T-cell (primary cell): ENCODE measurements at regions of chr19 and their contacts with region 1.

Region 1: GRCh38 chr19:52789421-52789820 is 2.8 kb upstream of the ZNF600 start:
- DNase-seq: no peak
- ATAC-seq: no peak
- H3K4me3 ChIP-seq: no peak overlapping the region
- H3K4me3 Mint-ChIP-seq: no peak overlapping the region
- H3K27ac ChIP-seq: no peak overlapping the region
- H3K27ac Mint-ChIP-seq: no peak overlapping the region
- H3K4me1 ChIP-seq: peaks cover 0 to 28% of the 10 kb centered on the region in 2 experiments
- H3K4me1 Mint-ChIP-seq: peaks cover 28 to 30% (median 28%) of the 10 kb centered on the region in 3 donors
- H3K27me3 ChIP-seq: peaks cover 0 to 2% of the 10 kb centered on the region in 2 experiments
- H3K27me3 Mint-ChIP-seq: no peaks in the 10 kb centered on the region

Region 2: GRCh38 chr19:52809801-52810200 is 20.4 kb after region 1 on chr19:
- CTCF ChIA-PET with region 1: interaction called in 1 of 2 experiments, 12 read pairs
- POLR2A ChIA-PET with region 1: no interaction called
- DNase-seq: no peak
- ATAC-seq: no peak
- H3K4me3 ChIP-seq: no peak overlapping the region
- H3K4me3 Mint-ChIP-seq: no peak overlapping the region
- H3K27ac ChIP-seq: no peak overlapping the region
- H3K27ac Mint-ChIP-seq: no peak overlapping the region
- H3K4me1 ChIP-seq: no peaks in the 10 kb centered on the region
- H3K4me1 Mint-ChIP-seq: no peaks in the 10 kb centered on the region
- H3K27me3 ChIP-seq: no peaks in the 10 kb centered on the region
- H3K27me3 Mint-ChIP-seq: no peaks in the 10 kb centered on the region

Region 3: GRCh38 chr19:52823676-52824075 is 34.3 kb after region 1 on chr19:
- CTCF ChIA-PET with region 1: no interaction called
- POLR2A ChIA-PET with region 1: no interaction called
- DNase-seq: no peak
- ATAC-seq: no peak
- H3K4me3 ChIP-seq: no peak overlapping the region
- H3K4me3 Mint-ChIP-seq: no peak overlapping the region
- H3K27ac ChIP-seq: no peak overlapping the region
- H3K27ac Mint-ChIP-seq: no peak overlapping the region
- H3K4me1 ChIP-seq: peaks cover 0 to 10% of the 10 kb centered on the region in 2 experiments
- H3K4me1 Mint-ChIP-seq: peaks cover 15 to 26% (median 19%) of the 10 kb centered on the region in 3 donors
- H3K27me3 ChIP-seq: no peaks in the 10 kb centered on the region
- H3K27me3 Mint-ChIP-seq: no peaks in the 10 kb centered on the region

Region 4: DNA sequence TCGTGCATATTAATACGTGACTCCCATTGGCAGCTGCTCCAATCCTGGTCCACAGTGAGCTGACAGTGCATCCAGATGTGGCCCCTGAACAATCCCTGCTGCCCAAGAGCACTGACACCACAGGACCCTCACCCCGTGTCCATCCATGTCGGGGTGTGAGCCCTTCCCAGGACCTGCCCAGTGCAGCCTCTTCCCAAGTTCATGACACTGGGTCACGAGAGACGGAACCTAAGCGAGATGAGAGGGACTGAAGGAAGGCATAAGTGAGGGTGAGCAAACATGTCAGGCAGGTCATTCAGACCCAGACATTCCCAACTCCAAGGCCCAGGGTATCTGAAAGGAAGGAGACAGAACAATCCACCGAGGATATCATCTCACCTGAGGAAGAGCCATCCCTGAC is 64.5 kb after region 1 on chr19:
- CTCF ChIA-PET with region 1: no interaction called
- POLR2A ChIA-PET with region 1: no interaction called
- DNase-seq: no peak
- ATAC-seq: no peak
- H3K4me3 ChIP-seq: no peak overlapping the region
- H3K4me3 Mint-ChIP-seq: peak overlapping the region in 1 of 3 donors; percentile 17
- H3K27ac ChIP-seq: no peak overlapping the region
- H3K27ac Mint-ChIP-seq: no peak overlapping the region
- H3K4me1 ChIP-seq: peaks cover 0 to 15% of the 10 kb centered on the region in 2 experiments
- H3K4me1 Mint-ChIP-seq: peaks cover 16 to 31% (median 24%) of the 10 kb centered on the region in 3 donors
- H3K27me3 ChIP-seq: no peaks in the 10 kb centered on the region
- H3K27me3 Mint-ChIP-seq: no peaks in the 10 kb centered on the region

Region 5: DNA sequence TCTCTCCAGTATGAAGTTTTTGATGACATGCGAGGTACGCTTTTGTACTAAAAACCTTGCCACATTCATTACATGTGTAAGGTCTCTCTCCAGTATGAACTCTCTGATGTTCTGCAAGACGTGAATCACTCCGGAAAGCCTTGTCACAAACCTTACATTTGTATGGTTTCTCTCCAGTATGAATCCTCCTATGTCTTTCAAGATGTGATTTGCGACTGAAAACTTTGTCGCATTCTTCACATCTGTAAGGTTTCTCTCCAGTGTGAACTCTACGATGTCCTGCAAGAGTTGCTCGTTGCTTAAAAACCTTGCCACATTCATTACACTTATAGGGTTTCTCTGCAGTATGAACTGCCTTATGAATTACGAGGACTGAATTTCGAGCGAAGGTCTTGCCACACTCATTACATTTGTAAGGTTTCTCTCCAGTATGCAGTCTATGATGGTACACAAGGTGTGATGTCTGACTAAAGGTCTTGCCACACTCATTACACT is 91.5 kb after region 1 on chr19:
- CTCF ChIA-PET with region 1: no interaction called
- POLR2A ChIA-PET with region 1: no interaction called
- DNase-seq: no peak
- ATAC-seq: no peak
- H3K4me3 ChIP-seq: no peak overlapping the region
- H3K4me3 Mint-ChIP-seq: no peak overlapping the region
- H3K27ac ChIP-seq: no peak overlapping the region
- H3K27ac Mint-ChIP-seq: no peak overlapping the region
- H3K4me1 ChIP-seq: no peaks in the 10 kb centered on the region
- H3K4me1 Mint-ChIP-seq: no peaks in the 10 kb centered on the region
- H3K27me3 ChIP-seq: no peaks in the 10 kb centered on the region
- H3K27me3 Mint-ChIP-seq: no peaks in the 10 kb centered on the region